ENCODE measurements at regions of chr3 and their contacts with region 1.

Region 1: DNA sequence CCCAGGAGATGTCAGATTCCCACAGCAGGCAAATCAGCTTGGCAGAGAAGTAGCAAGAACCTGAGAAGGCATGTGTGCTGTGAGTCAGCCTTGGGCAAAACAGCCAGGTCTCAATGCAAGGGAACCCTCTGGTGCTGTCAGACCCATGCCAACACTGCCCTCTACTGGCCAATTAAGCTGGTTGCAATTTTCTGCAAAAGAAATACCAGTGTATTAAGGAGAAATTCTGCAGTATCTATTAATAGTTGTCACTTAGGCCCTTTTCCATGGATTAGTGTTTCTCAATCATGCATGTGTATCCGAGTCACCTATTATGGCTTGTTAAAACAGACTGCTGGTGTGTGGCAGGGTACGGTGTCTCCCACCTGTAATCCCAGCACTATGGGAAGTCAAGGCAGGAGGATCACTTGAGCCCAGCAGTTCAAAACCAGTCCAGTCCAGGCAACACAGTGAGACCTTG is 26.2 kb downstream of the MAP4 start:
- DNase-seq: peak; percentile 34 to 88
- ATAC-seq: peak; percentile 95 to 98 (median 98)
- H3K4me3 ChIP-seq: no peak overlapping the region
- H3K4me3 Mint-ChIP-seq: no peak overlapping the region
- H3K27ac ChIP-seq: no peak overlapping the region
- H3K27ac Mint-ChIP-seq: no peak overlapping the region
- H3K4me1 ChIP-seq: no peaks in the 10 kb centered on the region
- H3K4me1 Mint-ChIP-seq: peaks cover 0 to 9% of the 10 kb centered on the region in 2 donors
- H3K27me3 ChIP-seq: no peaks in the 10 kb centered on the region
- H3K27me3 Mint-ChIP-seq: no peaks in the 10 kb centered on the region
- CTCF ChIP-seq: peak; percentile 82

Region 2: GRCh38 chr3:47522082-47522987 is 467.7 kb before region 1 on chr3:
- intact Hi-C with region 1: loop called (anchors 5 kb)
- DNase-seq: peak; percentile 57 to 87
- ATAC-seq: peak; percentile 85 to 99 (median 98)
- H3K4me3 ChIP-seq: no peak overlapping the region
- H3K4me3 Mint-ChIP-seq: no peak overlapping the region
- H3K27ac ChIP-seq: no peak overlapping the region
- H3K27ac Mint-ChIP-seq: no peak overlapping the region
- H3K4me1 ChIP-seq: peaks cover 6% of the 10 kb centered on the region
- H3K4me1 Mint-ChIP-seq: peaks cover 0 to 8% of the 10 kb centered on the region in 2 donors
- H3K27me3 ChIP-seq: no peaks in the 10 kb centered on the region
- H3K27me3 Mint-ChIP-seq: no peaks in the 10 kb centered on the region
- CTCF ChIP-seq: peak; percentile 89

Region 3: GRCh38 chr3:47824541-47825473 is 165.2 kb before region 1 on chr3:
- intact Hi-C with region 1: loop called (anchors 1 kb)
- DNase-seq: peak; percentile 80 to 91
- ATAC-seq: peak; percentile 98 to 99 (median 99)
- H3K4me3 ChIP-seq: peak overlapping the region; percentile 90
- H3K4me3 Mint-ChIP-seq: peak overlapping the region; percentile 89
- H3K27ac ChIP-seq: peak overlapping the region; percentile 52
- H3K27ac Mint-ChIP-seq: peak overlapping the region; percentile 58 to 90
- H3K4me1 ChIP-seq: peaks cover 19% of the 10 kb centered on the region
- H3K4me1 Mint-ChIP-seq: peaks cover 18 to 24% of the 10 kb centered on the region in 2 donors
- H3K27me3 ChIP-seq: no peaks in the 10 kb centered on the region
- H3K27me3 Mint-ChIP-seq: no peaks in the 10 kb centered on the region
- CTCF ChIP-seq: peak; percentile 88

Region 4: DNA sequence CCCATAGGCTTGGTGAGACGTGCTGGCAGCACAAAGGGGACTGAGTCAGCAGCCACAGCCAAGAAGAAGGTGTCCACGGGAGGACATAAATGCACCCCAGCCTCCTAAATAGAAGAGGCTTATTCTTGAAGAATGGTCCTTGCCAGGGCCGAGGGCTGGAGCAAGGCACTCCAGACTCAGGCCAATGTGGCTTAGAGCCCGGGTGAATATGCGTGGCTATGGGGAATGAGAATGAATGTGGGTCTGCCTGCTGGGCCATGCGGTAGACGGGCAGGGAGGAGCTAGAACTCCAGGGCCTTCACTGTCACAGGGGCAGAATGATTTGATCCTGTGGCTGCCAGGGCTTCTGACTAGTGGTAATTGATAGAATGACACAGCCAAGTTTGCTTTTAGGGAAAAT is 153.0 kb before region 1 on chr3:
- intact Hi-C with region 1: loop called (anchors 5 kb)
- DNase-seq: no peak
- ATAC-seq: no peak
- H3K4me3 ChIP-seq: no peak overlapping the region
- H3K4me3 Mint-ChIP-seq: no peak overlapping the region
- H3K27ac ChIP-seq: no peak overlapping the region
- H3K27ac Mint-ChIP-seq: peak overlapping the region; percentile 43 to 61
- H3K4me1 ChIP-seq: no peaks in the 10 kb centered on the region
- H3K4me1 Mint-ChIP-seq: peaks cover 0 to 6% of the 10 kb centered on the region in 2 donors
- H3K27me3 ChIP-seq: no peaks in the 10 kb centered on the region
- H3K27me3 Mint-ChIP-seq: no peaks in the 10 kb centered on the region
- CTCF ChIP-seq: no peak

Region 5: GRCh38 chr3:47954567-47954966 is 35.4 kb before region 1 on chr3:
- intact Hi-C with region 1: no loop called
- DNase-seq: no peak
- ATAC-seq: no peak
- H3K4me3 ChIP-seq: no peak overlapping the region
- H3K4me3 Mint-ChIP-seq: no peak overlapping the region
- H3K27ac ChIP-seq: no peak overlapping the region
- H3K27ac Mint-ChIP-seq: no peak overlapping the region
- H3K4me1 ChIP-seq: no peaks in the 10 kb centered on the region
- H3K4me1 Mint-ChIP-seq: peaks cover 0 to 9% of the 10 kb centered on the region in 2 donors
- H3K27me3 ChIP-seq: no peaks in the 10 kb centered on the region
- H3K27me3 Mint-ChIP-seq: no peaks in the 10 kb centered on the region
- CTCF ChIP-seq: no peak

Measured in natural killer cell (primary cell).